ENCODE measurements at regions of chr7 and their contacts with region 1.

Region 1: GRCh38 chr7:139645572-139646523 is 122.4 kb downstream of the CLEC2L start:
- DNase-seq: peak; percentile 85
- H3K4me3 Mint-ChIP-seq: no peak overlapping the region
- H3K27ac Mint-ChIP-seq: no peak overlapping the region
- H3K4me1 Mint-ChIP-seq: peaks cover 43% of the 10 kb centered on the region
- H3K27me3 Mint-ChIP-seq: no peaks in the 10 kb centered on the region

Region 2: DNA sequence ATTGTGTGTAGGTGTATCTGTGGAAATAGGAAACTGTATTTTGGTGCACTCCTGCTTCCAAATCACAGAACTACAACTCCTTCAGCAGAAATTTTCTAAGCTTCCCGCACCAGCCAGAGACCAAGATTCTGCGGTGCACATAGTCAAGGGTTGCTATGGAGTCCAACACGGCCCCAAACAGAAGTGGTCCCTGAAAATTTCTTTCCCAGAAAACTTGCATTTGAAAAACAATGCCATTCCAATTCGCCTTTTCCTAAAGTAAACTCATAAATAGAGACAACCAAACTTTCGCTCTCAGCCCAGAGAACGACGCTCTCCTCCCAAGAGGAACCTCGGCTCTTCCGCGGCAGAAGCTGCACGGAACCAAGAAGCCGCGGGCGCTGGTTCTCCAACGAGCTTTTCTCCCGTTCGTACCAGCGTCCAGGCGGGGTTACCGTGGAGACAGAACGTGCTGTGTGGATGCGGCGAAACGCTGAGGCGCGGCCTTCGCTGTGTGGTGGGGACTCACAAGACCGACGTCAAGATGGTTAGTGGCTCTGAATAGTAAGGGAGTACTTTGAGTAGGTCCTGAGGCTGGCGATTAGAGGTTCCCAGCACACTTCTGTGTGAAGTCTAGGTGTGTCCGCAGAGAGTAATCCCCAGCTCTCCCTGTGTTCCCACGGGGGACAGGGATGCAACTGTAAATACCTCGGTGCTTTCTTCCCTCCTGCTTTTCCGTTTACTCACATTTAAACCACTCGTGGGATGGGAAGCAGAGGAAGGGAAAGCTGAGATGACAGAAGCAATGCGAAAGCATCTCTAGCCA is 512.3 kb before region 1 on chr7:
- CTCF ChIA-PET with region 1: no interaction called
- POLR2A ChIA-PET with region 1: no interaction called
- DNase-seq: peak; percentile 90
- H3K4me3 Mint-ChIP-seq: peak overlapping the region; percentile 80
- H3K27ac Mint-ChIP-seq: peak overlapping the region; percentile 36
- H3K4me1 Mint-ChIP-seq: peaks cover 32% of the 10 kb centered on the region
- H3K27me3 Mint-ChIP-seq: peaks cover 4% of the 10 kb centered on the region

Region 3: DNA sequence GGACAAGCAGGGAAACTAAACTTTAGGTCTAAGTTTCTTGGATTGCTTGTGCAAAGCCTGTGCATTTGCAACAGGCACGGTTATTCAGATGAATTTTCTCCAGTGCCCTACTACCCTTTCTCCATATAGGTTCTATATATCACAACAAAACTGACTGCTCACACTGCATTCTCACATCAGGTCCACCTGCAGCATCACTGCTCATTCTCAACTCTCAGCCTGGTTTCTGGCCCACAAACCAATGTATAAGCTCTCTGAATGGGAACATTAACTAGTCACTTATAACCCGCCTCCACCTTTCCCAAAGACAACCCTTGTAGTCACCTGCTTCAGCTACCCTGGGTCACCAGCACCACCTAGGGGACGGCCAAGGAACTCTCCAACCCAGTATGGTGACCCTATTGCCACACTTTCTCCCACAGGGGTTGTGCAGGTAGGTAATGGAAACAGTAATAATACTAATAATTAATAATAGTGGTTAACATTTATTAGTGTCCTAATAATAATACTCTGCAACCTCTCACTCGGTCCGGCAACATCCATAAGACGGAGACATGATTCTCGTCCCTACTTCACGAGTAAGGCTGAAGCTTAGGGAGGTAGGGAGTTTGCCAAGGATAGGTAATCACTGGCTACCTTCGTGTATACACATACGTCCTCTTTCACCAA is 25.0 kb before region 1 on chr7:
- CTCF ChIA-PET with region 1: interaction called, 43 read pairs
- POLR2A ChIA-PET with region 1: no interaction called
- DNase-seq: peak; percentile 64
- H3K4me3 Mint-ChIP-seq: no peak overlapping the region
- H3K27ac Mint-ChIP-seq: no peak overlapping the region
- H3K4me1 Mint-ChIP-seq: peaks cover 23% of the 10 kb centered on the region
- H3K27me3 Mint-ChIP-seq: no peaks in the 10 kb centered on the region

Region 4: DNA sequence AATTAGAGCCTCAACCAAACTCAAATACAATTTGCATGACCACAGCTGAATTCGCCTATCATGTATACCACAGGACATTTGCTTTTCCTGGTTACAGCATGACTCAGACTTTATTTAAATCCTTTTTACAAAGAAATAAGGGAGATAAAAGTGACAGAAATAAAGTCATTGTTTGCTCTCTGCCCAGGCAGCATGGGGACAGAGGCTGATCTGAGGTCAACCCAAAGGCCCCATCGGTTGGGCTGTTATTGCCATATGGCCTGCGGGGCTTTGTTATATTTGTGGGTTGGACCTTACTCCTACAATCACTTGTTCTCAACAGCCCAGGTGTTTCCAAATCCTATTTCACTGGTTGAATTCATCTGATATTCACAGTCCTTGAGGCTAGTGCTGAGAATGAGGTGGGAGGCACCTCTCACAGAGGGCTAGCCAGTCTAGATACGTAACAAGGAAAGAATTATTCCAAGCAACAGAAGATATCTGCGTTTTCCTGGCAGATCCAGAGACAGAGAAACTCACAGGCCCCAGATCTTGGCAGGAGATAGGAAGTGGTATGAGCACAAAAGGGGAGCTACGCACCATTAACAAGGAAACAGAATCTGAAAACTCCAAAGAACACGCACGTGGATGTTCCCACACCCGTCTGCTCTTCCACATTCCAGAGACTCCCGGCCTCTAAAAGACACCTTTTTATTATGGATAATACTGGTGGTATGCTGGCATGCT is 14.6 kb after region 1 on chr7:
- CTCF ChIA-PET with region 1: interaction called, 12 read pairs
- POLR2A ChIA-PET with region 1: no interaction called
- DNase-seq: no peak
- H3K4me3 Mint-ChIP-seq: no peak overlapping the region
- H3K27ac Mint-ChIP-seq: no peak overlapping the region
- H3K4me1 Mint-ChIP-seq: peaks cover 21% of the 10 kb centered on the region
- H3K27me3 Mint-ChIP-seq: no peaks in the 10 kb centered on the region

Region 5: DNA sequence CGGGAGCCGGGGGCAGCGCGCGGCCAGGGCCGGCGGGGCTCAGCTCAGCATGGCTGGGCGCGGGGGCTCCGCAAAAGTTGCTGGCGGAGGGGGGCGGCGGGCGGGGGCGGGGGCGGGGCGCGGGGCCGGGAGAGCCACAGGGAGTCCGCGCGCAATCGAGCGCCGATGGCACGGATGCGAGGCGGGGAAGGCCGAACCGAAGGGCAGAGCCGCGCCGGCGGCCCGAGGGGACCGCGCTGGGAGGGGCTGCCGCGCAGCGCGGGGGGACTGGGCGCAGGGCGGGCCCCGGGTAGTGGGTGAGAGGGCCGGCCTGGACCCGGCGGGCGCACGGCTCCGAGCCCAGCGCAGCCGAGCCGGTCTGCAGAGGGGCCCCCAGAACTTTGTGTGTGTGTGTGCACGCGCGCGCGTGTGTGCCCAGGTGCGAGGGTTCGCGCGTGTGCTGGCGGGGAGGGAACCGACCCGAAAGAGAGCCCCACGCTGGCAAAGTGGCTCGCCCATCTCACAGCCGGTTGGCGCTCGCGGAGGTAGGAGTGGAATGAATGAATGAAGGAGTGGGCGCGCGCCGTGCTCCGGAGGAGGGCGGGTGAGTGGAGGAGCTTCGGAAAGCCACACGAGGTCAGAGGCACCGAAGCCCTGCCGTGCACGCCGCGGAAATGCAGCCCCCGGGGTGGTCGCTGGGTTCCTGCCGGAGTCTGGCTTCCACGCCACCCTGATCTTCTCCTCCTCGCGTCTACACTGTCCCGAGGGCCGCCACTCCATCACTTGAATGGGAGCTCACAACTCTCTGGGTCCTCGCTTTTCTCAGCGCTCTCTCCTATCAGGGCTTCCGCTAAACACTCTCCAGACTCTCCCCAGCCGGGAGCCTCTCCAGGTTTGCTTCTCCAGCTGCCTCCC is 132.3 kb after region 1 on chr7 and contains the start of gene HIPK2:
- CTCF ChIA-PET with region 1: interaction called, 30 read pairs
- POLR2A ChIA-PET with region 1: interaction called, 13 read pairs
- DNase-seq: peak; percentile 72
- H3K4me3 Mint-ChIP-seq: peak within 1 kb of the TSS; percentile 98
- H3K27ac Mint-ChIP-seq: peak within 1 kb of the TSS; percentile 96
- H3K4me1 Mint-ChIP-seq: peaks cover 38% of the 10 kb centered on the region
- H3K27me3 Mint-ChIP-seq: peaks cover 23% of the 10 kb centered on the region
- total RNA-seq, gene HIPK2: 24.0 to 25.2 TPM